CD4-positive, alpha-beta memory T cell (primary cell): ENCODE measurements at regions of chr14 and their contacts with region 1.

Region 1: DNA sequence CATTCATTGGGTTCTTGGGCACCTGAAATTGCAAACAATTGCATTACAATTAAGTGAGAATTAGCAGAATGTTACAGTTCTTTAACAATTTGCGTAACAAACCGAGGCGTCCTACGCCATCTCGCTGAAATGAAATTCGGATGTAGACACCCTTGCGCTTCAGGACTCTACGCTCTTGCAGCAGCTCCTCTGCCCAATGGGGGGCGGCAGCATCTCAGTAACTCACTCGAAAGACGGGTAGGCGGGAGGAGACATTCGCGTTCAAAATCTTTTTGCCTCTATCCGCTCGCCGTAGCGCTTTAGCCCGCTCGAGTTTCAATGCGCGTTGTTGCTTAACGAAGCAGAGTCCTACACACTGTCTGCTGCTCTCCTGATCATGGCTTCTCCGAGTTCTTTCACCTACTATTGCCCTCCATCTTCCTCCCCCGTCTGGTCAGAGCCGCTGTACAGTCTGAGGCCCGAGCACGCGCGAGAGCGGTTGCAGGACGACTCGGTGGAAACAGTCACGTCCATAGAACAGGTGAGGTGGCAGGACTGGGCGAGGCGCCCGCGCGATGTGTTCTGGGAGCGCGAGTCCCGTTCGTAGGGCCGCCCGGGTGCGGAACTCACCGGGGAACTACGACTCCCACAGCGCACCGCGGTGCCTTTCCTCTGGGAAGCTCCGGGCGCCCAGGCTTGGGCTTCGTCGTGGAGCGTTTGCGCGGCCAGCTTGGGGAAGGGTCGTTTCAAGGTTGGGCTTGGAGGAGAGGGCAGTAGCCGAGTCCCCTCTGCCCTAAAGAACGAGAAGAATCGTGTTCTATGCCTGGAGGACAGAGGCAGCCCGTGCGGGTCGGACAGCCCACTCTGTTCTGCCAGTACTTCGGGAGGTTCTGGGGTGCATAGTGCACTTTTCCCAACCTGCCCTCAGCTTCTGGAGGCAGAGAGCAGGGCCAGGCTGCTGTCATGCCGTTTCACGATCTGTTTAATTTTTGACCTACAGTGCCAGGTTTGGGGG is at the start of gene FNTB:
- DNase-seq: peak; percentile 93 to 96 (median 96)
- H3K4me3 ChIP-seq: peak within 1 kb of the TSS; percentile 57 to 98
- H3K4me3 Mint-ChIP-seq: peak within 1 kb of the TSS; percentile 92 to 100 (median 98)
- H3K27ac ChIP-seq: peak within 1 kb of the TSS; percentile 70
- H3K27ac Mint-ChIP-seq: peak within 1 kb of the TSS; percentile 89 to 100 (median 98)
- H3K4me1 ChIP-seq: peaks cover 48% of the 10 kb centered on the region
- H3K4me1 Mint-ChIP-seq: peaks cover 29 to 66% (median 45%) of the 10 kb centered on the region in 4 donors
- H3K27me3 ChIP-seq: no peaks in the 10 kb centered on the region
- H3K27me3 Mint-ChIP-seq: peaks cover 2 to 9% of the 10 kb centered on the region in 2 donors
- total RNA-seq, gene FNTB: 12.1 to 13.6 TPM

Region 2: GRCh38 chr14:64540208-64541157 is 446.4 kb before region 1 on chr14 and contains the start of gene HSPA2:
- CTCF ChIA-PET with region 1: no interaction called
- POLR2A ChIA-PET with region 1: no interaction called
- intact Hi-C with region 1: loop called (anchors 2 kb)
- DNase-seq: peak; percentile 92 to 94 (median 94)
- H3K4me3 ChIP-seq: peak within 1 kb of the TSS; percentile 65 to 86
- H3K4me3 Mint-ChIP-seq: peak within 1 kb of the TSS; percentile 92 to 99 (median 96)
- H3K27ac ChIP-seq: peak within 1 kb of the TSS; percentile 43
- H3K27ac Mint-ChIP-seq: peak within 1 kb of the TSS; percentile 86 to 98 (median 90)
- H3K4me1 ChIP-seq: peaks cover 24% of the 10 kb centered on the region
- H3K4me1 Mint-ChIP-seq: peaks cover 12 to 39% (median 29%) of the 10 kb centered on the region in 4 donors
- H3K27me3 ChIP-seq: no peaks in the 10 kb centered on the region
- H3K27me3 Mint-ChIP-seq: peaks cover 0 to 3% of the 10 kb centered on the region in 2 donors
- total RNA-seq, gene HSPA2: 1.3 to 1.5 TPM

Region 3: GRCh38 chr14:64823305-64823861 is 163.5 kb before region 1 on chr14:
- CTCF ChIA-PET with region 1: interaction called, 38 read pairs
- POLR2A ChIA-PET with region 1: interaction called, 5 read pairs
- intact Hi-C with region 1: loop called (anchors 1 kb)
- DNase-seq: peak; percentile 51 to 58 (median 55)
- H3K4me3 ChIP-seq: no peak overlapping the region
- H3K4me3 Mint-ChIP-seq: peak overlapping the region in 4 of 8 donors; percentile 35 to 46 (median 42)
- H3K27ac ChIP-seq: no peak overlapping the region
- H3K27ac Mint-ChIP-seq: peak overlapping the region in 2 of 7 donors; percentile 36 to 53
- H3K4me1 ChIP-seq: peaks cover 8% of the 10 kb centered on the region
- H3K4me1 Mint-ChIP-seq: peaks cover 2 to 6% (median 5%) of the 10 kb centered on the region in 4 donors
- H3K27me3 ChIP-seq: no peaks in the 10 kb centered on the region
- H3K27me3 Mint-ChIP-seq: peaks cover 3 to 19% of the 10 kb centered on the region in 2 donors

Region 4: DNA sequence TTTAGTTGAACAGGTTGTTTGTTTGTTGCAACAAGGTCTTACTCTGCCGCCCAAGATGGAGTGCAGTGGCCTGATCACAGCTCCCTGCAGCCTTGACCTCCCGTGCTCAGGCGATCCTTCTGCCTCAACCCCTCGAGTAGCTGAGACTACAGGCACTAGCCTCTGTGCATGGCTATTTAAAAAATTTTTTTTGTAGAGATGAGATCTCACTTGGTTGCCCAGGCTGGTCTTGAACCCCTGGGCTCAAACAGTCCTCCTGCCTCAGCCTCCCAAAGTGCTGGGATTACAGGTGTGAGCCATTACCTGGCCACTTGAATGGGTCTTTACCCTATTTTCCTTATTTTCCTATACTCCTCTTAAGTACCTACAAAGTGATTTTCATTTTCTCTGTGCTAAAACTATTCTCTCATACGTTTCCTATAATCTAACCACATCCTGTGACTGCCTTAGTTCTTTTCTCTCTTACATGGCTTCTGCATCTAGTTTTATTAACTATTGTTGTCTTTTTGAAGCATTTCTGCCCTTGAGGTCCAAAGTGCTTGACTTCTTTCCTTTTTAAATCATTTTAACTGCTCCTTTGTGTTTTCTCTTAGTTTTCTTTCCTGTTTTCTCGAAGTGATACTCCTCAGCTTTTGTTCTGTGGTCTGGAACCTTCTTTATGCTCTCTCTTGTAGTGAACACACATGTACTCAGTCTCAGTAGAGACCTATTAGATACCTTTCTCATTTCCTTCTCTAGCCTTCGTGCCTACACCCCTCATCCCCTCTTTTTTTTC is 58.4 kb before region 1 on chr14:
- CTCF ChIA-PET with region 1: interaction called, 5 read pairs
- POLR2A ChIA-PET with region 1: interaction called, 3 read pairs
- intact Hi-C with region 1: loop called (anchors 2 kb)
- DNase-seq: peak in 4 of 5 donors; percentile 42 to 63 (median 55)
- H3K4me3 ChIP-seq: peak overlapping the region in 1 of 2 donors; percentile 30
- H3K4me3 Mint-ChIP-seq: no peak overlapping the region
- H3K27ac ChIP-seq: peak overlapping the region; percentile 56
- H3K27ac Mint-ChIP-seq: no peak overlapping the region
- H3K4me1 ChIP-seq: peaks cover 86% of the 10 kb centered on the region
- H3K4me1 Mint-ChIP-seq: peaks cover 21 to 38% (median 30%) of the 10 kb centered on the region in 4 donors
- H3K27me3 ChIP-seq: no peaks in the 10 kb centered on the region
- H3K27me3 Mint-ChIP-seq: no peaks in the 10 kb centered on the region

Region 5: GRCh38 chr14:65019944-65020566 is 33.2 kb after region 1 on chr14:
- CTCF ChIA-PET with region 1: interaction called, 41 read pairs
- POLR2A ChIA-PET with region 1: interaction called, 3 read pairs
- intact Hi-C with region 1: no loop called
- DNase-seq: peak in 2 of 5 donors; percentile 8 to 18
- H3K4me3 ChIP-seq: no peak overlapping the region
- H3K4me3 Mint-ChIP-seq: no peak overlapping the region
- H3K27ac ChIP-seq: no peak overlapping the region
- H3K27ac Mint-ChIP-seq: peak overlapping the region in 2 of 7 donors; percentile 5 to 77
- H3K4me1 ChIP-seq: no peaks in the 10 kb centered on the region
- H3K4me1 Mint-ChIP-seq: peaks cover 0 to 2% (median under 1%) of the 10 kb centered on the region in 4 donors
- H3K27me3 ChIP-seq: no peaks in the 10 kb centered on the region
- H3K27me3 Mint-ChIP-seq: no peaks in the 10 kb centered on the region

Region 6: DNA sequence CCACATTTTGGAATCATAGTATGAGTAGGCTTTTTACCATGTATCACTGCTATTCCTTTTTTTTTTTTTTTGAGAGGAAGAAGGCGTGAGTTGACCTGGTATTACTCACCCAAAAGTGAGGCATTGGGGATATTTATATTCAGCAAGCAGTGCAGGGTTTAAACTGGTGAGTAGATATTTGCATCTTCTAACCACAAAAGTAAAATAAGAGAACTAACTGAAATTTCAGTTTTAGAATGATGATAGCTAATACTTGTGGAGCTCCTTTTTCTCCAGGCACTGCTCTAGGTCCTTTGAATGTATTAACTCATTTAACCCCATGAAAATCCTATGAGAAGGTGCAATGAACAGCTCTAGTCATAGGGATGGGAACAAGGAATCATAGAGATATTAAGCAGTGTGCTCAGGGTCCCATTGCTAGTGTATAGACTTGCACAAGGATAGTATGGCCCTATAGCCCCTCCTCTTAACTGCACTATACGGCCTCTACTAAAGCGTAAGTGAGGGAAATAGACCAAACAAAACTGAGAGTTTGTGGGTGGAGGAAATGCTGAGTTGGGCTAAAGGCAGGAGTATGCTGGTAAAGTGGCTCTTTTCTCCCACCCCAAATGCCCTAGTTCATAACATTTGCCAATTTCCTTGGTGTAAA is 219.7 kb after region 1 on chr14:
- CTCF ChIA-PET with region 1: no interaction called
- POLR2A ChIA-PET with region 1: no interaction called
- intact Hi-C with region 1: loop called (anchors 5 kb)
- DNase-seq: no peak
- H3K4me3 ChIP-seq: no peak overlapping the region
- H3K4me3 Mint-ChIP-seq: peak overlapping the region; percentile 50 to 89 (median 82)
- H3K27ac ChIP-seq: peak overlapping the region; percentile 47
- H3K27ac Mint-ChIP-seq: peak overlapping the region; percentile 78 to 98 (median 94)
- H3K4me1 ChIP-seq: peaks cover 72% of the 10 kb centered on the region
- H3K4me1 Mint-ChIP-seq: peaks cover 50 to 77% (median 62%) of the 10 kb centered on the region in 4 donors
- H3K27me3 ChIP-seq: no peaks in the 10 kb centered on the region
- H3K27me3 Mint-ChIP-seq: no peaks in the 10 kb centered on the region

Region 7: DNA sequence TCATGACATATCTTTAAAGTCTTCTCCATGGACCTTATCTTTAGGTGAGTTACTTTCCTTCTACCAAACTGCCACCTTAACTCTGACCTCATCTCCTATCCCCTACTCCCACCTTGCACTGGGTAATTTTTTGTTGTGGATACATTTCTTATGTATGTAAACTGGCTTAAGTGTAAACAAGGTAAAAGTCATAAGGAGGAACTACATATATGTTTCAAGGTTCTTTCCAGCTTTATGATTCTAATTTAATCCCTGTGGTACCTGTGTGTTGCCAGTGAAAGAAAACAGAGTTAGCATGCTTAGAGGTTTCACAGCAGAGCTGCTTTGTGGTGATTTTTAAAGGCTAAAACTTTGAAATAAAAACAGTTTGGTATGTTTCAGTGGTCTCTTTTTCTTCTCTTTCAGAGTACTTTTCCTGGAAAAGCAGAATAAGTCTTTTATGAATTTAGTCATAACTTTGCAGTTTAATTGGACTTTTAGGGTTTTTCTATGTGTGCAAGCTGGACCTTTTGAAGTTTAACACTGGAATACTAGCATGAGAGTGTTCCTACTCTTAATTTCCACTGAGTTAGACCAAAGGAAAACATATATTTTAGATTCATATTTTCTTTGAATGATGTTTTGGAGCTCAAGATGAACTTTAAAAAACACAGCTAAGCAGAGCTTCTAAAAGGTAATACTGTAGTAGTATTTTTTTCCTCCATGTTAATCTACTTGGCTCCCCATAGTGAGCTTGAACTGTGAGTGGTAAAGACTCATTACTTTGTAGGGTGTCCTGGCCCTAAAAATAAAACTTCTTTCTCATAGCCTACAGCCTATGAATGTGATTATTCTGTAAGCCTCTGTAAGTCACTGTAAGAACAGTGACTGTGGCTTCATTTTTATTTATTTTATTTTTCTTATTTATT is 531.0 kb after region 1 on chr14:
- CTCF ChIA-PET with region 1: no interaction called
- POLR2A ChIA-PET with region 1: no interaction called
- intact Hi-C with region 1: no loop called
- DNase-seq: no peak
- H3K4me3 ChIP-seq: no peak overlapping the region
- H3K4me3 Mint-ChIP-seq: no peak overlapping the region
- H3K27ac ChIP-seq: no peak overlapping the region
- H3K27ac Mint-ChIP-seq: peak overlapping the region in 5 of 7 donors; percentile 1 to 92 (median 68)
- H3K4me1 ChIP-seq: peaks cover 14% of the 10 kb centered on the region
- H3K4me1 Mint-ChIP-seq: peaks cover 32 to 46% (median 34%) of the 10 kb centered on the region in 4 donors
- H3K27me3 ChIP-seq: no peaks in the 10 kb centered on the region
- H3K27me3 Mint-ChIP-seq: no peaks in the 10 kb centered on the region

Region 8: GRCh38 chr14:66070509-66071319 is 1083.8 kb after region 1 on chr14:
- CTCF ChIA-PET with region 1: interaction called, 3 read pairs
- POLR2A ChIA-PET with region 1: no interaction called
- intact Hi-C with region 1: loop called (anchors 2 kb)
- DNase-seq: peak; percentile 52 to 70 (median 53)
- H3K4me3 ChIP-seq: no peak overlapping the region
- H3K4me3 Mint-ChIP-seq: peak overlapping the region in 1 of 8 donors; percentile 27
- H3K27ac ChIP-seq: no peak overlapping the region
- H3K27ac Mint-ChIP-seq: peak overlapping the region in 3 of 7 donors; percentile 36 to 54 (median 37)
- H3K4me1 ChIP-seq: no peaks in the 10 kb centered on the region
- H3K4me1 Mint-ChIP-seq: peaks cover 3 to 6% (median 6%) of the 10 kb centered on the region in 4 donors
- H3K27me3 ChIP-seq: no peaks in the 10 kb centered on the region
- H3K27me3 Mint-ChIP-seq: peaks cover 0 to 4% of the 10 kb centered on the region in 2 donors